Activated naive CD4-positive, alpha-beta T cell treated with anti-CD3 and anti-CD28 coated beads for 36 hours (primary cell): ENCODE measurements at regions of chr12 and their contacts with region 1.

Region 1: GRCh38 chr12:685388-685787 is 22.1 kb upstream of the NINJ2 start:
- DNase-seq: peak; percentile 94
- H3K4me3 Mint-ChIP-seq: peak overlapping the region; percentile 36
- H3K27ac Mint-ChIP-seq: peak overlapping the region; percentile 82
- H3K4me1 Mint-ChIP-seq: peaks cover 36% of the 10 kb centered on the region
- H3K27me3 Mint-ChIP-seq: no peaks in the 10 kb centered on the region

Region 2: DNA sequence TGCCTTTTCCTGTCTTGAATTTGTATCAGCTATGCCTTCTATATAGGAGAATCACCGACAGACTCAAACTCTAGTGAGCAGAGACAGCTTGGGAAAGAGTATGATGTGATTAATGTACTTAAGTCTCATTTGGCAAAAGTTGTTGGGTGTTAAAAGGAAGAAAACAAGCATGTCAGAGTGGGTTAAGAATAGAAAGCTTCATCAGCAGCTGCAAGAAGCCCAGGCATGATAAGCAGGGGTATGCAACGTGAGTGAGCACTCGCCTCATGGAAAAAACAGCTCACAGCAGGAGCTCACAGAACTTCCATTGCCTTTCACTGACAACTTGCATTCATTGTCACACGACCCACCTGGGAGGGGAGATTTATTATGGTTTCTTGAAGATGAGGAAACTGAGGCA is 31.1 kb after region 1 on chr12:
- CTCF ChIA-PET with region 1: interaction called, 3 read pairs
- intact Hi-C with region 1: loop called (anchors 1 kb)
- DNase-seq: peak; percentile 80
- H3K4me3 Mint-ChIP-seq: peak overlapping the region; percentile 0
- H3K27ac Mint-ChIP-seq: peak overlapping the region; percentile 75
- H3K4me1 Mint-ChIP-seq: peaks cover 65% of the 10 kb centered on the region
- H3K27me3 Mint-ChIP-seq: no peaks in the 10 kb centered on the region